CD8-positive, alpha-beta T cell (primary cell): ENCODE measurements at regions of chr3 and their contacts with region 1.

Region 1: GRCh38 chr3:42247576-42248027 is 18.4 kb downstream of the CCK start:
- DNase-seq: peak; percentile 34 to 82 (median 69)
- ATAC-seq: peak; percentile 83
- H3K4me3 ChIP-seq: no peak overlapping the region
- H3K4me3 Mint-ChIP-seq: peak overlapping the region; percentile 24
- H3K27ac ChIP-seq: no peak overlapping the region
- H3K27ac Mint-ChIP-seq: no peak overlapping the region
- H3K4me1 ChIP-seq: peaks cover 3% of the 10 kb centered on the region
- H3K4me1 Mint-ChIP-seq: peaks cover 7% of the 10 kb centered on the region
- H3K27me3 ChIP-seq: no peaks in the 10 kb centered on the region
- H3K27me3 Mint-ChIP-seq: no peaks in the 10 kb centered on the region
- CTCF ChIP-seq: peak; percentile 80

Region 2: GRCh38 chr3:41111016-41111415 is 1136.6 kb before region 1 on chr3:
- CTCF ChIA-PET with region 1: no interaction called
- POLR2A ChIA-PET with region 1: no interaction called
- intact Hi-C with region 1: no loop called
- DNase-seq: no peak
- ATAC-seq: no peak
- H3K4me3 ChIP-seq: no peak overlapping the region
- H3K4me3 Mint-ChIP-seq: no peak overlapping the region
- H3K27ac ChIP-seq: no peak overlapping the region
- H3K27ac Mint-ChIP-seq: no peak overlapping the region
- H3K4me1 ChIP-seq: no peaks in the 10 kb centered on the region
- H3K4me1 Mint-ChIP-seq: no peaks in the 10 kb centered on the region
- H3K27me3 ChIP-seq: no peaks in the 10 kb centered on the region
- H3K27me3 Mint-ChIP-seq: no peaks in the 10 kb centered on the region
- CTCF ChIP-seq: no peak

Region 3: GRCh38 chr3:42090973-42091731 is 156.4 kb before region 1 on chr3 and contains the start of gene TRAK1:
- CTCF ChIA-PET with region 1: no interaction called
- POLR2A ChIA-PET with region 1: no interaction called
- intact Hi-C with region 1: no loop called
- DNase-seq: no peak
- ATAC-seq: peak; percentile 46
- H3K4me3 ChIP-seq: no peak within 1 kb of the TSS
- H3K4me3 Mint-ChIP-seq: peak within 1 kb of the TSS; percentile 63
- H3K27ac ChIP-seq: no peak within 1 kb of the TSS
- H3K27ac Mint-ChIP-seq: peak within 1 kb of the TSS; percentile 42
- H3K4me1 ChIP-seq: peaks cover 4% of the 10 kb centered on the region
- H3K4me1 Mint-ChIP-seq: peaks cover 39% of the 10 kb centered on the region
- H3K27me3 ChIP-seq: no peaks in the 10 kb centered on the region
- H3K27me3 Mint-ChIP-seq: no peaks in the 10 kb centered on the region
- CTCF ChIP-seq: no peak
- total RNA-seq, gene TRAK1: 21.6 to 22.8 TPM

Region 4: GRCh38 chr3:42443819-42444436 is 196.3 kb after region 1 on chr3:
- CTCF ChIA-PET with region 1: interaction called, 86 read pairs
- POLR2A ChIA-PET with region 1: no interaction called
- intact Hi-C with region 1: loop called (anchors 1 kb)
- DNase-seq: peak; percentile 67 to 91 (median 72)
- ATAC-seq: peak; percentile 82
- H3K4me3 ChIP-seq: no peak overlapping the region
- H3K4me3 Mint-ChIP-seq: no peak overlapping the region
- H3K27ac ChIP-seq: no peak overlapping the region
- H3K27ac Mint-ChIP-seq: no peak overlapping the region
- H3K4me1 ChIP-seq: no peaks in the 10 kb centered on the region
- H3K4me1 Mint-ChIP-seq: no peaks in the 10 kb centered on the region
- H3K27me3 ChIP-seq: no peaks in the 10 kb centered on the region
- H3K27me3 Mint-ChIP-seq: peaks cover 6% of the 10 kb centered on the region
- CTCF ChIP-seq: peak; percentile 95

Region 5: GRCh38 chr3:42539869-42540714 is 292.5 kb after region 1 on chr3:
- CTCF ChIA-PET with region 1: interaction called, 3 read pairs
- POLR2A ChIA-PET with region 1: no interaction called
- intact Hi-C with region 1: loop called in 1 of 2 experiments (anchors 2 kb)
- DNase-seq: peak; percentile 32 to 80 (median 70)
- ATAC-seq: peak; percentile 64
- H3K4me3 ChIP-seq: no peak overlapping the region
- H3K4me3 Mint-ChIP-seq: no peak overlapping the region
- H3K27ac ChIP-seq: no peak overlapping the region
- H3K27ac Mint-ChIP-seq: no peak overlapping the region
- H3K4me1 ChIP-seq: peaks cover 20% of the 10 kb centered on the region
- H3K4me1 Mint-ChIP-seq: peaks cover 21% of the 10 kb centered on the region
- H3K27me3 ChIP-seq: no peaks in the 10 kb centered on the region
- H3K27me3 Mint-ChIP-seq: no peaks in the 10 kb centered on the region
- CTCF ChIP-seq: peak; percentile 67

Region 6: DNA sequence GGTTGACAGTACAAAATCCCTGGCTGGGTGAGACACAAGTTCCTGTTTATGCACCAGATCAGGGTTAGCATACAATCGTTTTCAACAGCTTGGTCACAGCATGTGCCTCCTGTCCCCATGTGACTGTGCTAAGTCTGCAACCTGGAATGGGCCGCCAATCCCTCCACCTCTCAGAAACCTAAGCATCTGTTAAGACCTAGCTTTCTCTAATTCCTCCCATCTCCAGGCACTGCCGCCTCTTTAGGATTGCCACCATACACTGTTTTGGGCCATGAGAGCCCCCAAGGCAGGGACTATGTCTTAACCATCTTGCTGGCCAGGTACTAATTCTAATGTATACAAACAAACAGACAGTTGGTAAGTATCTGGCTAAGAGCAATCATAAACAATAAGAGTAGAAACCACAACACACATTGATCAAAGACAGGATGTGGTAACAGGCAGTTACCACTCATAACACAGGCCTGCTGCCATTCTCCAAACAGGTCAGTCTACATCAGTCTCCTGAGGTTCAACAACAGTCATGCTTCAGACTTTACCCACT is 308.6 kb after region 1 on chr3:
- CTCF ChIA-PET with region 1: interaction called, 5 read pairs
- POLR2A ChIA-PET with region 1: no interaction called
- intact Hi-C with region 1: loop called in 1 of 2 experiments (anchors 1 kb)
- DNase-seq: peak in 8 of 9 experiments; percentile 18 to 82 (median 58)
- ATAC-seq: peak; percentile 83
- H3K4me3 ChIP-seq: no peak overlapping the region
- H3K4me3 Mint-ChIP-seq: peak overlapping the region; percentile 59
- H3K27ac ChIP-seq: peak overlapping the region; percentile 42 to 55
- H3K27ac Mint-ChIP-seq: peak overlapping the region; percentile 97
- H3K4me1 ChIP-seq: peaks cover 21% of the 10 kb centered on the region
- H3K4me1 Mint-ChIP-seq: peaks cover 29% of the 10 kb centered on the region
- H3K27me3 ChIP-seq: no peaks in the 10 kb centered on the region
- H3K27me3 Mint-ChIP-seq: no peaks in the 10 kb centered on the region
- CTCF ChIP-seq: no peak

Region 7: GRCh38 chr3:42880601-42881451 is 633.2 kb after region 1 on chr3:
- CTCF ChIA-PET with region 1: no interaction called
- POLR2A ChIA-PET with region 1: no interaction called
- intact Hi-C with region 1: loop called in 1 of 2 experiments (anchors 2 kb)
- DNase-seq: peak; percentile 65 to 95 (median 86)
- ATAC-seq: peak; percentile 99
- H3K4me3 ChIP-seq: peak overlapping the region; percentile 75 to 77
- H3K4me3 Mint-ChIP-seq: peak overlapping the region; percentile 84
- H3K27ac ChIP-seq: peak overlapping the region; percentile 37 to 59
- H3K27ac Mint-ChIP-seq: peak overlapping the region; percentile 86
- H3K4me1 ChIP-seq: peaks cover 15% of the 10 kb centered on the region
- H3K4me1 Mint-ChIP-seq: peaks cover 11% of the 10 kb centered on the region
- H3K27me3 ChIP-seq: no peaks in the 10 kb centered on the region
- H3K27me3 Mint-ChIP-seq: no peaks in the 10 kb centered on the region
- CTCF ChIP-seq: peak; percentile 86